ENCODE measurements at regions of chr11 and their contacts with region 1.

Region 1: GRCh38 chr11:84157639-84158038 is 871.5 kb upstream of the CCDC90B start:
- DNase-seq: no peak
- ATAC-seq: no peak
- H3K4me3 ChIP-seq: no peak overlapping the region
- H3K27ac ChIP-seq: no peak overlapping the region
- H3K4me1 ChIP-seq: no peaks in the 10 kb centered on the region
- H3K27me3 ChIP-seq: no peaks in the 10 kb centered on the region
- CTCF ChIP-seq: no peak

Region 2: GRCh38 chr11:85494396-85494795 is 1336.8 kb after region 1 on chr11:
- CTCF ChIA-PET with region 1: interaction called, 10 read pairs
- POLR2A ChIA-PET with region 1: no interaction called
- in situ Hi-C with region 1: no loop called
- intact Hi-C with region 1: no loop called
- DNase-seq: no peak
- ATAC-seq: no peak
- H3K4me3 ChIP-seq: no peak overlapping the region
- H3K27ac ChIP-seq: no peak overlapping the region
- H3K4me1 ChIP-seq: no peaks in the 10 kb centered on the region
- H3K27me3 ChIP-seq: no peaks in the 10 kb centered on the region
- CTCF ChIP-seq: no peak